ENCODE measurements at regions of chr10 and their contacts with region 1.

Region 1: GRCh38 chr10:87861953-87862678 is 1.2 kb downstream of the KLLN start:
- DNase-seq: peak; percentile 92 to 96
- ATAC-seq: peak; percentile 66 to 72
- H3K4me3 ChIP-seq: peak overlapping the region; percentile 83 to 91 (median 87)
- H3K27ac ChIP-seq: peak overlapping the region; percentile 86 to 97 (median 92)
- H3K4me1 ChIP-seq: peaks cover under 1 to 2% of the 10 kb centered on the region in 2 donors
- H3K27me3 ChIP-seq: no peaks in the 10 kb centered on the region
- CTCF ChIP-seq: no peak
- POLR2A ChIP-seq: peak; percentile 52 to 65

Region 2: DNA sequence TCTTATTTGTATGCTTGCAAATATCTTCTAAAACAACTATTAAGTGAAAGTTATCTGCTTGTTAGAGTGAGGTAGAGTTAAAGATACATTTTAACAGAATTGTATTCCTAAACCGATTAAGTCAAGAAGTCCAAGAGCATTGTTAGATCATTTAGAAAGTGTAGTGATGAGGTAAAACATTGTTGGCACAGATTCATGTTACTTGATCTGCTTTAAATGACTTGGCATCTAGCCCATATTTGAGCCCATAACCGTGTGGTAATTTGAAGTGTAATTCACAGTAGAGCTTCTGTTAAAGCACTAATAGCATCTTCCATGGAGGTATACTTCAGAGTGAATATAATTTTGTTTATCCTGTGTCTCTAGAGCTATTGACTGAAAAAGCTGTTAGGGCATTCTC is 63.5 kb after region 1 on chr10:
- in situ Hi-C with region 1: no loop called
- intact Hi-C with region 1: no loop called
- DNase-seq: no peak
- ATAC-seq: no peak
- H3K4me3 ChIP-seq: no peak overlapping the region
- H3K27ac ChIP-seq: no peak overlapping the region
- H3K4me1 ChIP-seq: peaks cover 59 to 72% of the 10 kb centered on the region in 2 donors
- H3K27me3 ChIP-seq: no peaks in the 10 kb centered on the region
- CTCF ChIP-seq: no peak
- POLR2A ChIP-seq: no peak

Region 3: GRCh38 chr10:88091490-88092105 is 229.5 kb after region 1 on chr10:
- in situ Hi-C with region 1: no loop called
- intact Hi-C with region 1: loop called (anchors 5 kb)
- DNase-seq: peak in 1 of 2 donors; percentile 18
- ATAC-seq: peak in 1 of 2 donors; percentile 31
- H3K4me3 ChIP-seq: no peak overlapping the region
- H3K27ac ChIP-seq: no peak overlapping the region
- H3K4me1 ChIP-seq: no peaks in the 10 kb centered on the region
- H3K27me3 ChIP-seq: no peaks in the 10 kb centered on the region
- CTCF ChIP-seq: no peak
- POLR2A ChIP-seq: no peak

Region 4: GRCh38 chr10:88256013-88256680 is 394.0 kb after region 1 on chr10:
- in situ Hi-C with region 1: loop called in 1 of 4 experiments (anchors 25 kb)
- intact Hi-C with region 1: loop called (anchors 5 kb)
- DNase-seq: peak; percentile 84 to 86
- ATAC-seq: peak; percentile 78 to 87
- H3K4me3 ChIP-seq: peak overlapping the region; percentile 10 to 33 (median 23)
- H3K27ac ChIP-seq: peak overlapping the region; percentile 78 to 86 (median 80)
- H3K4me1 ChIP-seq: peaks cover 34 to 45% of the 10 kb centered on the region in 2 donors
- H3K27me3 ChIP-seq: no peaks in the 10 kb centered on the region
- CTCF ChIP-seq: no peak
- POLR2A ChIP-seq: peak; percentile 41 to 76

Region 5: DNA sequence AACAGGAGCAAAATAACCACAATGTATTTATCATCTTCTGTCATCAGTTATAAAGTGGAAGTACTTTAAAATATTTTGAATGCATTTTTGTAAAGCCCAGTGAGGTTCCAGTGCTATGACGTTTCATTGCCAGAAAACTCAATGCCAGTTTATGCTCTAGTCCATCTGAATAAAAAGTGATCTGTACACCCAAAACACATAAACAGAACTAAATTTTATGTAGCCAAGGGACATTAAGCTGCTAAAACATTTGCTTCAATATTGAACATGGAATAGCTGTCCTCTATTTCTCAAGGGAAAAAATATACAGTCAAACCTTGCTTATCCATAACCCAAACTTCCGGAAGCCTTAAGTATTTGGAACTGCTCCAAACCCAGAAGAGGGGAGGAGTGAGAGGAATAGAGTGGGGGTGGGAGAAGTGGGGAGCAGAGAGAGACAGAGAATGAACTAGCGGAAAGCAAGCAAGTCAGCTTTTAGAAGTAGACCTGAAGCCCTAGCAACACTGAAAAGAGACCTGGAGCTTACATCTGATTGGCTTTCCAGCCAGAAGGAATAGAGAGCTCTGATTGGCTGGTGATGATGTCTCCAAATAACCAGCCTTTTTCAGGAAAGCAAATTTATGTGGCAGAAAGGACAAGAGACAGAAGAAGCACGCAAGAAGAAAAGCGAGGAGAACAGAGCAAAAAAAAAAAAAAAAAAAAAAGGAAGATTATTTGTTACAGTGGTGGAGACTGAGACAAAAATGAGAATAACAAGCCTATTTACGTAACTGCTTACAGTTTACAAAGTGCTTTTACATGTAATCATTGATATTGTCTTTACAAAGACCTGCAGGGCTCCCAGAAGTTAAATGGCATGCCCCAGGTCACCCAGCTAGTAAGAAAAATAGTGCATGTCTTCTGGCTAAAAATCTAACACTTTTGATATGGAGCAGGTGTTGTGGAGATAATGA is 525.0 kb after region 1 on chr10:
- in situ Hi-C with region 1: loop called in 3 of 4 experiments (anchors 5 to 10 kb)
- intact Hi-C with region 1: loop called (anchors 2 kb)
- DNase-seq: peak; percentile 16 to 18
- ATAC-seq: peak; percentile 75 to 76
- H3K4me3 ChIP-seq: peak overlapping the region in 3 of 4 donors; percentile 16 to 30 (median 29)
- H3K27ac ChIP-seq: peak overlapping the region; percentile 22 to 56 (median 41)
- H3K4me1 ChIP-seq: peaks cover 12 to 20% of the 10 kb centered on the region in 2 donors
- H3K27me3 ChIP-seq: no peaks in the 10 kb centered on the region
- CTCF ChIP-seq: no peak
- POLR2A ChIP-seq: peak in 1 of 2 donors; percentile 26

Region 6: DNA sequence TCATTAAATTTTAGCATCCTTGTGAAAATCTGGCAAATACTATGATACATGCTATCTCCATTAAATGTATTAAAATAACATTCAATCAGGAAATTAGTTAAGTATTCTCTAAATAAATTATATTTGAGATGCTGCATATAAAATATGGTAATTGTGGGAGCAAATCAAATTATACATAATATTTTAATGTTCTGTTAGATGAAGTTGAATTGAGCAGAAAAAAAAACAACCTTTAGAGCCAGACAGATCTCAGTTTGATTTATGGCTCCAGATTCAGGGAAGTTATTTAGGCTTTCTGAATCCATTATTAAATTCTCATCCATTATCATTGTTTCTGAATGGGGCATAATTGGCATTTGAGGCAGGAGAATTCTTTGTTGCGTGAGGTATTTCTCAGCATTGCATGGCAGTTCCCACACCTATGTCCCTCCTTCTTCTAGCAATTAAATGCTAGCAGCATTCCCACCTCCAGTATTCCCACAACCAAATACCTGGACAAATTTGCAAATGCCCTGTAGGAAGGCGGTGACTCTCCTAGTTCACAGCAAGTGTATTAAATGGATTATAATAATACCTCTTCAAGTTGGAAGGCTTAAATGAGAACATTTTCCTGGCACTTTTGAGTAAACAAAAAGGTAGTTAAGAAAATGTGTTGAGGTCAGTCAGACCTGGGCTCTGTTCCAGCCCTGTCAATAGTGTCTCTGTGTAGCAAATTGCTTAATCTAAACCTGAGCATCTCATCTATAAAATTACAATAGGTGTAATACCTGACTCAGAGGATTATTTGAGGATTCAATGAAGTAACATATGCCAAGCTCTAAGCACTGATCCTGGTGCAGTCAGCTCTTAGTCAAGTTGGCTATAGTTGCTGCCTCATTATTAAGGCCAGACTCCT is 612.1 kb after region 1 on chr10:
- in situ Hi-C with region 1: no loop called
- intact Hi-C with region 1: loop called (anchors 5 kb)
- DNase-seq: peak; percentile 64 to 71
- ATAC-seq: peak; percentile 66 to 77
- H3K4me3 ChIP-seq: peak overlapping the region in 3 of 4 donors; percentile 6 to 29 (median 21)
- H3K27ac ChIP-seq: peak overlapping the region; percentile 80 to 88 (median 83)
- H3K4me1 ChIP-seq: peaks cover 22 to 43% of the 10 kb centered on the region in 2 donors
- H3K27me3 ChIP-seq: no peaks in the 10 kb centered on the region
- CTCF ChIP-seq: no peak
- POLR2A ChIP-seq: peak in 1 of 2 donors; percentile 4